HepG2 (cell line): ENCODE measurements at regions of chr7 and their contacts with region 1.

Region 1: DNA sequence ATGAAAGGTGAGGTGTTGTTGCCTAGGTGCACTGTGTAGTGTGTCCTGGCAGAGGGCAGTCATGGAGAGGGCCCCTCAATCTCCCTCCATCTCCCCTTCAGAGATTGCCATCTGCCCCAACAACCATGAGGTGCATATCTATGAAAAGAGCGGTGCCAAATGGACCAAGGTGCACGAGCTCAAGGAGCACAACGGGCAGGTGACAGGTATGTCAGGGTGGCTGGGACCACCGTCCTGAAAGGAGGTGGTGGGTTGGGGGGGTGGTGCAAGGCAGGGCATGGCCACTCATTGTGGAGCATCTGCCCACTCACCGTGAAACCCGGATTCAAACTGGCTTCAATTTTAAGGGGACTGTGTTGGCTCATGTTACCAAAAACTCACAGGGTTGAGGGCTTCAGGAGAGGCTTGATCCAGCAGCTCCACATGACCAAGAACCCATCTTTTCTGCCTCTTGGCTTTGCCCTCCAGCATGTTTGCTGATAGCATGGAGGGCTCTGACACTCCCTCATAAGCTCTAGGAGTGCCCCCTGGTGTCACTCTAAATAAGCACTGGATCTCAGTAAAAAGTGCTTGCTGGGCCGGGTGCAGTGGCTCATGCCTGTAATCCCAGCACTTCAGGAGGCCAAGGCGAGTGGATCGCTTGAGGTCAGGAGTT is 12.2 kb downstream of the ARPC1B start:
- DNase-seq: peak; percentile 67
- ATAC-seq: peak; percentile 75
- H3K4me3 ChIP-seq: no peak overlapping the region
- H3K27ac ChIP-seq: no peak overlapping the region
- H3K4me1 ChIP-seq: peaks cover 8% of the 10 kb centered on the region
- H3K27me3 ChIP-seq: no peaks in the 10 kb centered on the region
- CTCF ChIP-seq: peak; percentile 77
- EP300 ChIP-seq: no peak
- POLR2A ChIP-seq: no peak
- RAD21 ChIP-seq: peak; percentile 77

Region 2: DNA sequence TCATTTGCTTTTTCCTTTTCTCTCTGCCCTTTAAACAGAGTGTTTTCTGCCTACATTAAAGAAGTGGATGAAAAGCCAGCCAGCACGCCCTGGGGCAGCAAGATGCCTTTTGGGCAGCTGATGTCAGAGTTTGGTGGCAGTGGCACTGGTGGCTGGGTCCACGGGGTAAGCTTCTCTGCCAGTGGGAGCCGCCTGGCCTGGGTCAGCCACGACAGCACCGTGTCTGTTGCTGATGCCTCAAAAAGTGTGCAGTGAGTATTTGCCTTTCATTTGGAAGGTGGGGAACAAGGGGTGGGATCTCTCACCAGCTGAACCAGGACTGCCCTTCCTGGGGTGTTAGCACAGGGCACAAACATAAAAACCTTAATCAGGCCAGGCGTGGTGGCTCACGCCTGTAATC is 32.8 kb before region 1 on chr7:
- CTCF ChIA-PET with region 1: no interaction called
- POLR2A ChIA-PET with region 1: no interaction called
- in situ Hi-C with region 1: no loop called
- intact Hi-C with region 1: no loop called
- DNase-seq: no peak
- ATAC-seq: no peak
- H3K4me3 ChIP-seq: no peak overlapping the region
- H3K27ac ChIP-seq: no peak overlapping the region
- H3K4me1 ChIP-seq: no peaks in the 10 kb centered on the region
- H3K27me3 ChIP-seq: no peaks in the 10 kb centered on the region
- CTCF ChIP-seq: no peak
- EP300 ChIP-seq: no peak
- POLR2A ChIP-seq: no peak
- RAD21 ChIP-seq: no peak

Region 3: GRCh38 chr7:99364961-99365817 is 21.5 kb before region 1 on chr7:
- CTCF ChIA-PET with region 1: interaction called, 18 read pairs
- POLR2A ChIA-PET with region 1: no interaction called
- in situ Hi-C with region 1: no loop called
- intact Hi-C with region 1: loop called (anchors 1 kb)
- DNase-seq: peak; percentile 22
- ATAC-seq: peak; percentile 95
- H3K4me3 ChIP-seq: no peak overlapping the region
- H3K27ac ChIP-seq: no peak overlapping the region
- H3K4me1 ChIP-seq: 0 out of 2 replicates have a peak, but pooled peaks cover 8% of the 10 kb centered on the region
- H3K27me3 ChIP-seq: no peaks in the 10 kb centered on the region
- CTCF ChIP-seq: peak; percentile 86
- EP300 ChIP-seq: no peak
- POLR2A ChIP-seq: no peak
- RAD21 ChIP-seq: peak; percentile 76

Region 4: DNA sequence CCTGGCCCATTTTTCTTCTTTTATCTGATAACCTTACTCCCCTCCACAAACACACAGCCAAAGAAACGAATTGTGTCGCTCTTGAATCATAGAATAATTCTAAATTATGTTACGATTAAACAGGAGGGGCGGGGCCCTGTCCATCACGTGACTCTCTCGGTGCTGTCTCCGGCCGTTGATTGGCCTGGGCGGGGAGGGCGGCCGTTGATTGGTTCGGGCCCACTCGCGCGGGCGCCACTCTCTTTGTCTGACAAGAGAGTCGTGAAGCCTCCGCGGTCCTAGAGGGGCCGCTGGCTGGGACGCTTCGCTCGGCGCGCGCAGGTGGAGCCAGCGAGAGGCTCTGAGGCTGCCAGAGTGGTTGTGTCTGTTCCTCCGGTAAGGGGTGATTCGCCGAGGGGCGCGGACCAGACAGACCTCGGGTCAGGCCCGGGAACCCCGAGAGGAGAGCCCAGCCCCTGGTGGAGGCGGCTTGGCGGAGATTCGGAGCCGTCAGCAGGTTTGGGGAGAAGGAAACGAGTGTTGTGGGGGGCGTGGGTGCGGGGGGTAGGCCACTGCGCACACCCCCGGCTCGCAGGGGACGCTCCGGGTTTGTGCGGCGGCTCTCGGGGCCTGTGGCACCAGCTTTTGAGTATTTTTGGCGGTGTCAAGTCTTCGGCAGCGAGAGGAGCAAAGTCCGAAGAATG is 86.0 kb after region 1 on chr7 and contains the start of gene ZNF789:
- CTCF ChIA-PET with region 1: no interaction called
- POLR2A ChIA-PET with region 1: no interaction called
- in situ Hi-C with region 1: no loop called
- intact Hi-C with region 1: no loop called
- DNase-seq: peak; percentile 94
- ATAC-seq: peak; percentile 95
- H3K4me3 ChIP-seq: peak within 1 kb of the TSS; percentile 73 to 86 (median 79)
- H3K27ac ChIP-seq: peak within 1 kb of the TSS; percentile 84
- H3K4me1 ChIP-seq: peaks cover 55% of the 10 kb centered on the region
- H3K27me3 ChIP-seq: no peaks in the 10 kb centered on the region
- CTCF ChIP-seq: no peak
- EP300 ChIP-seq: peak in 1 of 2 experiments; percentile 17; a peak in 1 of 4 replicates
- POLR2A ChIP-seq: peak; percentile 79 to 87
- RAD21 ChIP-seq: no peak
- total RNA-seq, gene ZNF789: 15.3 and 19.8 TPM in 2 replicates

Region 5: DNA sequence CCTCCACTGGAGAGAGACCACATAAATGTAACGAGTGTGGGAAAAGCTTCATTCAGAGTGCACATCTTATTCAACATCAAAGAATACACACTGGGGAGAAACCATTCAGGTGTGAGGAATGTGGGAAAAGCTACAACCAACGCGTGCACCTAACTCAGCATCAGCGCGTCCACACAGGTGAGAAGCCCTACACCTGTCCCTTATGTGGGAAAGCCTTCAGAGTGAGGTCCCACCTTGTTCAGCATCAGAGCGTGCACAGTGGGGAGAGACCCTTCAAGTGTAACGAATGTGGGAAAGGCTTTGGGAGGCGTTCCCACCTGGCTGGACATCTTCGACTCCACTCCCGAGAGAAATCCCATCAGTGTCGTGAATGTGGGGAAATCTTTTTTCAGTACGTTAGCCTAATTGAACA is 144.6 kb after region 1 on chr7:
- CTCF ChIA-PET with region 1: no interaction called
- POLR2A ChIA-PET with region 1: no interaction called
- in situ Hi-C with region 1: no loop called
- intact Hi-C with region 1: no loop called
- DNase-seq: no peak
- ATAC-seq: no peak
- H3K4me3 ChIP-seq: no peak overlapping the region
- H3K27ac ChIP-seq: no peak overlapping the region
- H3K4me1 ChIP-seq: no peaks in the 10 kb centered on the region
- H3K27me3 ChIP-seq: no peaks in the 10 kb centered on the region
- CTCF ChIP-seq: no peak
- EP300 ChIP-seq: no peak
- POLR2A ChIP-seq: no peak
- RAD21 ChIP-seq: no peak

Region 6: GRCh38 chr7:101251871-101252659 is 1865.4 kb after region 1 on chr7:
- CTCF ChIA-PET with region 1: no interaction called
- POLR2A ChIA-PET with region 1: no interaction called
- in situ Hi-C with region 1: no loop called
- intact Hi-C with region 1: no loop called
- DNase-seq: peak; percentile 95
- ATAC-seq: peak; percentile 99
- H3K4me3 ChIP-seq: peak overlapping the region; percentile 86 to 99 (median 98)
- H3K27ac ChIP-seq: peak overlapping the region; percentile 76
- H3K4me1 ChIP-seq: peaks cover 14% of the 10 kb centered on the region
- H3K27me3 ChIP-seq: no peaks in the 10 kb centered on the region; a peak in 2 of 5 replicates
- CTCF ChIP-seq: no peak
- EP300 ChIP-seq: no peak
- POLR2A ChIP-seq: peak; percentile 73 to 82
- RAD21 ChIP-seq: no peak